HCT116 (cell line): ENCODE measurements at regions of chr1 and their contacts with region 1.

Region 1: DNA sequence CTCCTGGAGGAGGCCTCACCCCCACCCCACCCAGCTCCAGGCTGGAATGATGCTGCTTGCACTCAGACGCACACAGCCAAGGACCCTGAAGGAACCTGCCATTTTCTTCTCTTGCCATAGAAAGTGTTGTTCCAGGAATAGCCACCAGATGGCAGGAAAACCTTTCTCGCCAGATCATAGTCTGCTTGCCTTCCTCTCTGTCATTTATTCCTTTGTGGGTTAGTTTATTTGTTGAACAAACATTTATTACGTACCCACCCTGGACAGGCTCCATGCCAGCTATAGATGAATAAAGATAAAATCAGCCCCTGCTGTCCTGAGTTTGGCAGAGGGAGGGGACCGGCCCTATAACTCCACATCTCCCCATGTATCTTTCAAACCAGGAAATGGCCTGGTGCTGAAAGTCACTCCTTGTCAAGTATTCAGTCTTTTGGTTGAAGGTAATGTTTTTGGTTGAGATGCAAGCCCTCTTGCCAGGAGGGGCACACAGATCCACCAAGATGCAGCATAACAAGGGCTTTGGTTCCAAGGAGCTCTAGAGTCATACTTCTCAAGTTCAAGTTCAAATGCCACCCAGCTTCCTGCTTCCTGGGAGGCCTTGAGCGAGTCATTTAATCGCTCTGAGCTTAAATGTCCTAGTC is 7.0 kb upstream of the KCNC4 start:
- DNase-seq: peak; percentile 55
- ATAC-seq: peak; percentile 71
- H3K4me3 ChIP-seq: no peak overlapping the region
- H3K27ac ChIP-seq: 0 out of 2 replicates have a peak overlapping the region, but pooled peaks have one; percentile 3
- H3K4me1 ChIP-seq: peaks cover 0 to 15% of the 10 kb centered on the region in 2 experiments; a peak in 2 of 4 replicates
- H3K27me3 ChIP-seq: no peaks in the 10 kb centered on the region
- CTCF ChIP-seq: peak; percentile 75 to 89 (median 88)
- POLR2A ChIP-seq: no peak
- RAD21 ChIP-seq: peak; percentile 93

Region 2: DNA sequence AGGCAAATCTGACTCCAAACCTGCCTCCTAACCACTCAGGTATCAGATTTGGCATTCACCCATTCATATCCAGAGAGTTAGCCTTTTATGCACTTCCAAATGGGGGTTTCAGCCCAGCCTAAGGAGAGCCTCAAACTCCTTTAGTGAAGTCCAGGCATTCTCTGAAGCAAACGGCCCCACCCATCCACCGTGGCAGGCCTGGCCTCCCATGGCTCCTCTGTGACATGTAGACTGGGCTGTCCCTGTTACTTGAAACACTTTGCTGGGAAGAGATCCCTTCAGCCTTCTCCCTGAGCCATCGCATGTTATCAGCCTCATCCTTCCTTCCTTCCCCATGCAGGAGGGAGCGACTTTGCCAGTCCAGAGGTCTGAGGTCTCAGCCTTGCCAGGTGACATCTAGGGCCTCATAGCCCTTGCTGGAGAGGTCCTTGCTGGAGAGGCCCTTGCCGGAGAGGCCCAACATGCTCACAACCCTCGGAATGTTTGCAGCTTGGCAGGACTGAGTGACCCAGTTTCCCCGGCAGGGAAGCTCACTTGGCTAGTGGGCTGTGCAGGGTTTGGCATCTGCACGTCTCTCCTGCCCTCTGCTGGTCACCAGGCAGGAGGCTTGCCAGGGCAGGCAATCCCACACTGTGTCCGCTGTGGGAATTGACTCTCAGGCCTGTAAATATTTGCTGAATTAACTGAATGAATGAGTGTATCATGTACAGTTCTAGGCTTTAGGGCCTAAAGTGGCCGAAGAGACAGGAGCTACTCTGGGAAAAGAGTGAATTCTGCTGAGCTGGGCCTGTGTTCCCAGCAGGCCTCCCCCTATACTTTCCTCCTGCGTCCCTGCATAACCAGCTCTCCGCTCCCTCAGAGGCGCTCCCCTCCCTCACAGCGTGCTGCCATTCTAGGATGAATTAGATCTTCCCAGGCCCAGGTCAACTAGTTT is 109.3 kb after region 1 on chr1:
- CTCF ChIA-PET with region 1: interaction called, 206 read pairs
- POLR2A ChIA-PET with region 1: interaction called, 18 read pairs
- RAD21 ChIA-PET with region 1: interaction called, 47 to 62 read pairs
- intact Hi-C with region 1: loop called (anchors 1 kb)
- DNase-seq: peak; percentile 54
- ATAC-seq: peak; percentile 99
- H3K4me3 ChIP-seq: no peak overlapping the region
- H3K27ac ChIP-seq: no peak overlapping the region
- H3K4me1 ChIP-seq: peaks cover 2 to 20% of the 10 kb centered on the region in 2 experiments; a peak in 2 of 4 replicates
- H3K27me3 ChIP-seq: no peaks in the 10 kb centered on the region
- CTCF ChIP-seq: peak; percentile 93 to 97 (median 93)
- POLR2A ChIP-seq: no peak
- RAD21 ChIP-seq: peak; percentile 99

Region 3: DNA sequence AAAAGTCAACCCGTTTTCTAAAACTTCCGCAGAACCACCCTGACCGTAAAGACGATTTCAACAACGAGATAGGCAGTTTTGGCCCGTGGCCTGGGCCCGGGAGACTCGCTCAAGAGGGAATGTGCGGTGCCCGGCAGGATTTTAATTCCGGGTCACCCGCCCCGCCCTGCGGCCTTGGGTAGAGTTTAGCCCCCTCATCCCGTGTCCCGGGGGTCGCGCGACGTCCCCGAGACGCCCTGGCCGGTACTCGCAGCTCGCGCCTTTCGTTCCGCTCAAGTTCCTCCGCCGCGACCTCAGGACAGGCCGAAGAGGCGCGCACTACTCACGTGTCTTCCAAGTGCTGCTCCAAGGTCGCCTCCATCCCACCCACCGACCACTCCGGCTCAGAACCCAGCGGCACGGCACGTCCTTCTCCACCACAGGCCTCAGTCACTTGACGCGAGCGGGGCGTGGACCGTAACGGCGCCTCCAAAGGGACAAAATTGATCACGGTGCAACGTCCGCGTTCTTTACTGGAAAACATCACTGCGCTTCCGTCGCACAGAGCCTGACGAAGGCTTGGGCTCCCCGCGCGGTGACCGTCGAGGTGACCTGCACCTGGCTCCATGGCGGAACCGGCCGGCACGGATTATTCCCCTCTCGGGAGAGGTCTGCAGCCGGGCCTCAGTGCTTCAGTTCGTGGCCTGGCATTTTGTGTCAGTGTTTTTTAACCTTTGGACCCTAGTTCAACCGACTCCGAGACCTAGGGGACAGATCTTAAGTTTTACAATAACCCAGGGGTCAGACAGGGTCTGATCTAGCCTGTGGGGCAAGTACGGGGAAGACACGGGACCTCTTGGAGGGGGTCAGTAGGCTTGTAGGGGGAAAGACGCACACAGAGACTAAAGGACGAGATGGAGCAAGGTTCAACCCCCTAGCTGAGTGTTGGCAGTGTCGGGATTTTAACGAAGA is 204.4 kb after region 1 on chr1 and contains the start of gene LAMTOR5:
- CTCF ChIA-PET with region 1: interaction called, 4 read pairs
- POLR2A ChIA-PET with region 1: interaction called, 4 read pairs
- RAD21 ChIA-PET with region 1: interaction called in 1 of 2 experiments, 3 read pairs
- intact Hi-C with region 1: loop called (anchors 5 kb)
- DNase-seq: peak; percentile 93
- ATAC-seq: peak; percentile 89
- H3K4me3 ChIP-seq: peak within 1 kb of the TSS; percentile 96 to 98
- H3K27ac ChIP-seq: peak within 1 kb of the TSS; percentile 80
- H3K4me1 ChIP-seq: peaks cover 4 to 14% of the 10 kb centered on the region in 2 experiments; a peak in 3 of 4 replicates
- H3K27me3 ChIP-seq: no peaks in the 10 kb centered on the region
- CTCF ChIP-seq: no peak
- POLR2A ChIP-seq: peak; percentile 63
- RAD21 ChIP-seq: no peak
- total RNA-seq, gene LAMTOR5: 137 TPM